Mammary epithelial cell (primary cell): ENCODE measurements at regions of chr10 and their contacts with region 1.

Region 1: GRCh38 chr10:131024259-131025131 is 287.0 kb downstream of the TCERG1L start:
- DNase-seq: no peak
- H3K4me3 ChIP-seq: no peak overlapping the region
- H3K27ac ChIP-seq: no peak overlapping the region
- H3K4me1 ChIP-seq: no peaks in the 10 kb centered on the region
- H3K27me3 ChIP-seq: no peaks in the 10 kb centered on the region
- CTCF ChIP-seq: no peak

Region 2: GRCh38 chr10:130935131-130935445 is 89.4 kb before region 1 on chr10:
- CTCF ChIA-PET with region 1: no interaction called
- dilution Hi-C with region 1: loop called (anchors 5 kb)
- in situ Hi-C with region 1: no loop called
- intact Hi-C with region 1: no loop called
- DNase-seq: no peak
- H3K4me3 ChIP-seq: no peak overlapping the region
- H3K27ac ChIP-seq: no peak overlapping the region
- H3K4me1 ChIP-seq: no peaks in the 10 kb centered on the region
- H3K27me3 ChIP-seq: no peaks in the 10 kb centered on the region
- CTCF ChIP-seq: no peak

Region 3: DNA sequence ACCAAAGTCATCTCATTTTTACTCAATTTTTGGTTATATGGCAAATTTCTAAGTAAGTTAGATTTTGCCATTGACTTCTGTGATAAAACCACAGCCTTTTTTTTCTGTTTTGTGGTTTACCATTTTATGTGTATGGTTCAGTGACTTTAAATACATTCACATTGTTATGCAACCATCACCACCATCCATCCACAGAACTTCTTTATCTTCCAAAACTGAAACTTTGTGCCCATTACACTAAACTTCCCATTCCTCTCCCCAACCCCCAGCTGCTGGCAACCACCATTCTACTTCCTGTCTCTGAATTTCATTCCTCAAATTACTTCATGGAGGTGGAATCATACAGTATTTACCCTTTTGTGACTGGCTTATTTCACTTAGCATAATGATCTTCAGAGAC is 567.4 kb after region 1 on chr10:
- CTCF ChIA-PET with region 1: no interaction called
- dilution Hi-C with region 1: no loop called
- in situ Hi-C with region 1: no loop called
- intact Hi-C with region 1: no loop called
- DNase-seq: no peak
- H3K4me3 ChIP-seq: no peak overlapping the region
- H3K27ac ChIP-seq: no peak overlapping the region
- H3K4me1 ChIP-seq: no peaks in the 10 kb centered on the region
- H3K27me3 ChIP-seq: no peaks in the 10 kb centered on the region
- CTCF ChIP-seq: no peak